ENCODE measurements at regions of chr2 and their contacts with region 1.

Region 1: GRCh38 chr2:231713730-231714430 is 5.6 kb downstream of the PTMA start:
- DNase-seq: peak; percentile 89 to 95
- ATAC-seq: peak; percentile 50 to 67 (median 60)
- H3K4me3 ChIP-seq: no peak overlapping the region
- H3K27ac ChIP-seq: peak overlapping the region; percentile 48
- H3K4me1 ChIP-seq: peaks cover 39% of the 10 kb centered on the region
- H3K27me3 ChIP-seq: no peaks in the 10 kb centered on the region
- CTCF ChIP-seq: peak; percentile 93

Region 2: DNA sequence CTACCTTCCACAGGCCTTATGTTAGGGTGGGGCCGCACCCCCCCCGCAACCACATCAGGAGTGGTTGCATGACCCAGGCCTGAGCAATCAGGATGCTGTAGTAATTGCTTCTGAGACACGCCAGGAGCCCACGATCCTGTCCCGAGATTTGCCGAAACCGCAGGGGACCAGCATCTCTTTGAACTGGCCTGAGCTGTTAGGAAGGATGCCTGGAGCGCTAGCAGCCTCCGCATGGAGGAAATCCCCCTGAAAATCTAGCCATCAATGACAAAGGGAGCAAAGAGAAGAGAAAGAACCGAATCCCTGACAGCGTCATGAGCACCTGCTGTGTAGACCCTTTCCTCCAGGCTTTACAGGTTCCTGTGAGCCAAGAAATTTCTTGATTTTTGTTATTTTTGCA is 129.9 kb before region 1 on chr2:
- intact Hi-C with region 1: no loop called
- DNase-seq: no peak
- ATAC-seq: no peak
- H3K4me3 ChIP-seq: no peak overlapping the region
- H3K27ac ChIP-seq: no peak overlapping the region
- H3K4me1 ChIP-seq: no peaks in the 10 kb centered on the region
- H3K27me3 ChIP-seq: no peaks in the 10 kb centered on the region
- CTCF ChIP-seq: no peak

Region 3: GRCh38 chr2:231674587-231675338 is 39.1 kb before region 1 on chr2:
- intact Hi-C with region 1: loop called (anchors 1 to 2 kb)
- DNase-seq: peak; percentile 77 to 87
- ATAC-seq: peak; percentile 60 to 81 (median 68)
- H3K4me3 ChIP-seq: no peak overlapping the region
- H3K27ac ChIP-seq: peak overlapping the region; percentile 80
- H3K4me1 ChIP-seq: peaks cover 15% of the 10 kb centered on the region
- H3K27me3 ChIP-seq: no peaks in the 10 kb centered on the region
- CTCF ChIP-seq: peak; percentile 73

Region 4: DNA sequence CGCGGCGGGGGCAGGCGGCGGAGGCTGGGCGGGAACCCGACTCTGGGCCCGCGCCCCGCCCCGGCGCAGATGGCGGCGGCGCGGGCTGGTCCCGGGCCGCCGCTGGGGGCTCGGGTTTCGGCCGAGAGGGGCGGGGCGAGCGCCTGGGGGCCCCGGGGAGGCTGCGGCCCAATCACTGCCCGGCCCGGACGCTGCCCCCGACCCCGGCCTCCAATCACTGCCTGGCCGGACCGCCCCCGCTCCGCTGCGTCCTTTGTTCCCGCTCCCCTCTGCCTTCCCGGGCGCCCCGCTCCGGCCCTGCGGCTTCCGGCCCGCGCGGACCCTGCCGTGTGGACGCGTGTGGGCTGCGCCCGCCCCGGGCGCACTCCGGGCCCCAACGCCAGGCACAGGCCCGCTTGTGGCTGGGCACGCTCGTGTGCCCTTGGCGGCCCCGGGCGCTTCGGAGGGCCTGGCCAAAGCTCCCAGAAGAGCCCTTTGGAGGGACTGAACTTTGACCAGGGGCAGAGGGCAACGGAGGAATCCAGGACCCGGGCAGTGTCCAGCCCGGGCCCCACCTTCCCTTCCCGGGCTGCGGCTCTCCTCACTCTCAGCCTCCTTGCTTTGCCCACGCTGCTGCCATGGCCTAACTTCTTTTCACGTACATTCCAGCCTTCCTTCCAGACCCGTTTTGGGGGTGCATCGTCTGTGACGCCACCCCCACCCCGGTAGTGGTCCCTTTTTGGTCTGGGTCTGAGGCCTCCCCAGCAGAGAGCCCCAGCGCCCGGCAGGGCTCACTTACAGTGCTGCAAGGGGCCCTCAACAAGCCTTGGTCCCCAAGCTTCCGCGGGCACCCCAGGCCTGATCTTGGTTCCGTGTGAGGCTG is 32.7 kb before region 1 on chr2:
- intact Hi-C with region 1: loop called (anchors 1 to 2 kb)
- DNase-seq: peak; percentile 92 to 95
- ATAC-seq: peak; percentile 94 to 95 (median 95)
- H3K4me3 ChIP-seq: peak overlapping the region; percentile 78
- H3K27ac ChIP-seq: peak overlapping the region; percentile 92
- H3K4me1 ChIP-seq: peaks cover 5% of the 10 kb centered on the region
- H3K27me3 ChIP-seq: no peaks in the 10 kb centered on the region
- CTCF ChIP-seq: no peak

Region 5: GRCh38 chr2:231732604-231733003 is 18.7 kb after region 1 on chr2:
- intact Hi-C with region 1: no loop called
- DNase-seq: no peak
- ATAC-seq: no peak
- H3K4me3 ChIP-seq: no peak overlapping the region
- H3K27ac ChIP-seq: no peak overlapping the region
- H3K4me1 ChIP-seq: no peaks in the 10 kb centered on the region
- H3K27me3 ChIP-seq: no peaks in the 10 kb centered on the region
- CTCF ChIP-seq: no peak